Ascending aorta (tissue), 2 donors: ENCODE measurements at regions of chr12 and their contacts with region 1.

Region 1: GRCh38 chr12:120725659-120726509 is at the start of gene ACADS:
- DNase-seq: peak; percentile 40 to 93
- H3K4me3 ChIP-seq: peak within 1 kb of the TSS; percentile 75 to 91
- H3K27ac ChIP-seq: peak within 1 kb of the TSS; percentile 83 to 85
- H3K4me1 ChIP-seq: peaks cover 0 to 8% of the 10 kb centered on the region in 2 donors
- H3K27me3 ChIP-seq: no peaks in the 10 kb centered on the region
- CTCF ChIP-seq: no peak
- total RNA-seq, gene ACADS: 58.5 TPM

Region 2: DNA sequence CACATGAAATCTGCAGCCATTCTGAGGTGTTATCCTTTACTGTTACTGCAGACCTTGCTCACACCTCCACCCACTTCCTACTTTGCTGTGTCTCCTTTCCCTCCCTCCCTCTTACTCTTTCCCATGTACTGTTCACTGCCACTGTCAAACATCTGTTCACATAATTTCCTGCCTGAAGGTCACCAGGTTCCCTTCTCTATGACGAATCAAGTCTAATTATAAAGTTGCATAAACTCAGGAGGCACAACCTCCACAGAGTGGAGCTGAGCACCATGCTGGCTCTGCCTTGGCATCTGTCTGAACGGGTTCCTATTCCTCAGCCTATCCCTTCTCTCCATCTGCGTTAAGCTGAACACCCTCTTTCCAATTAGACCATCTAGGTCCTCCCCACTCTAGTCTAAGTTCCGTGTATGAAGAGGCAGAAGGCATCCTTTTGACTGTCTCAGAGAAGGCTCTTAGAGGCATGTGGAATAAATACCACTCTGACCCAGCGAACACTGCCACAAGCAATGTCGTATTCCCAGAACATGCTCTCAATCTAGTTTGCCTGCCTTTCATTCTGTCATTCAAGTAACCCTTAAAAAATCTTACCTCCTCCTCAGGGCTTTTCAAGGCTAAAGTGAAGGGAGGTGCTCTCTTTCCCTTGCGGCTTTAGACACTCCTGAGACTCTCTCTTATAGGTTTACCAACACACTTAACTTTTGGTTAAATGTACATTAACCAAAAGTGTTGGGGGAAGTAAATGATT is 48.5 kb after region 1 on chr12:
- intact Hi-C with region 1: no loop called
- DNase-seq: no peak
- H3K4me3 ChIP-seq: no peak overlapping the region
- H3K27ac ChIP-seq: no peak overlapping the region
- H3K4me1 ChIP-seq: no peaks in the 10 kb centered on the region
- H3K27me3 ChIP-seq: no peaks in the 10 kb centered on the region
- CTCF ChIP-seq: no peak

Region 3: DNA sequence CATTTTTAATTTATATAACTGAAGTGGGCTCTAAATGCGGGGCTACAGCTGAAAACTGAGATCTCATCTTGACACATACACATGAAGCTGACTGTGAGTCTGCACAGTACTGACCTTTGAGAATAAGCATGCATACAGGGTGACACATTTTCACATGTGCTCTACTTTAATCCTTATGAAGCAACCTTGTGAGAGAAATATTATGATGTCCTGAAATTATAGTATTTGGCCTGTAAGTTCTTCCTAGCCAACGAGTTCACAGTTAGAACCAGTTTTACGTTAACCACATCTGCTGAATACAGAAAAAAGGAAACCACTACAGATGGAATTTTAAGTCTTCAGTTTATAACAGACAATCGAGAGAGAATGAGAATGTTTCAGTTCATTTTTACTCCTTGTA is 108.0 kb after region 1 on chr12:
- intact Hi-C with region 1: no loop called
- DNase-seq: no peak
- H3K4me3 ChIP-seq: no peak overlapping the region
- H3K27ac ChIP-seq: peak overlapping the region; percentile 34 to 57
- H3K4me1 ChIP-seq: peaks cover 6 to 38% of the 10 kb centered on the region in 2 donors
- H3K27me3 ChIP-seq: no peaks in the 10 kb centered on the region
- CTCF ChIP-seq: no peak

Region 4: GRCh38 chr12:120904197-120904773 is 178.4 kb after region 1 on chr12 and contains the start of gene SPPL3:
- intact Hi-C with region 1: loop called (anchors 2 kb)
- DNase-seq: peak; percentile 62 to 94
- H3K4me3 ChIP-seq: peak within 1 kb of the TSS; percentile 91 to 97
- H3K27ac ChIP-seq: peak within 1 kb of the TSS; percentile 83 to 93
- H3K4me1 ChIP-seq: peaks cover 12 to 30% of the 10 kb centered on the region in 2 donors
- H3K27me3 ChIP-seq: no peaks in the 10 kb centered on the region
- CTCF ChIP-seq: no peak
- total RNA-seq, gene SPPL3: 20.4 TPM

Region 5: DNA sequence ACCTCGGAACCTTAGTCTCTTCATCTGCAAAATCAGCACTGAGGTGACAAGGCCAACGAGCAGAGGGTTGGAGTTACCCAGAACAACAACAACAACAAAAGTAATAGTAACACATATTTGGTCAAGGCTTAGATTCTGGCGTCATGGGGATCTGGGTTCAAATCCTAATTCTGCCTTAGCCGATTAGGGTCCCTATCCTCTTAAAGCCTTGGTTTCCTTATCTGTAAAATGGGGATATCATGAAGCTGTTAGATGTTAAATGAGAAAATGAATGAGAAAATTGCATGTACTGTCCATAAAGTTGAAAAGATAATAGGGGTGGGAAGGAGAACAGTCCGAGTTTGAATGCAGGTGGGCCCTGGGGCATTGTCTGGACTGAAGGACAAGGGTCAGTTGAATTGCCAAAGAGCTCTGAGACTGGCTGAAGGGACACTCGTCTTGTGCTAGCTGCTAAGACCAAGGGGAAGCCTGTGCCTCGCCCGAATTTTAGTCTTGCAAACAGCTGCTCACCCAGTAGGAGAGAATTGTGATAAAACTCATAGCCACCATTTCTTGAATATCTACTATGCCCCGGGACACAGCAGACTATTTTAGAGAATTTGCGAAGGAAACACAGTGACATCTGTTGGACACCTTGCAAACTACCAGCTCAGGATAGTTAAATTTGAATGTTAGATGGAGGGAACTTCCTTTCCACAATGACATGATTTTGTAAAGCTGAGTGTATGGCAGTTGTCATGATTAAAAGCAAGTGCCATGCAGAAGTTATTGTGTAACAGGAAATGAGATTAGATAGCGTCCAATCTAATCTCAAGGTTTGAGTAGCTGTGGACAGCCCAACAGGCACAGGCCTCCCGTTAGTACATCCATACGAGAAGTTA is 245.7 kb after region 1 on chr12:
- intact Hi-C with region 1: loop called (anchors 10 kb)
- DNase-seq: no peak
- H3K4me3 ChIP-seq: no peak overlapping the region
- H3K27ac ChIP-seq: no peak overlapping the region
- H3K4me1 ChIP-seq: no peaks in the 10 kb centered on the region
- H3K27me3 ChIP-seq: no peaks in the 10 kb centered on the region
- CTCF ChIP-seq: peak; percentile 69 to 81 (median 71)